A673 (cell line): ENCODE measurements at regions of chr5 and their contacts with region 1.

Region 1: GRCh38 chr5:37814699-37815098 is 25.1 kb downstream of the GDNF start:
- DNase-seq: peak; percentile 77
- H3K4me3 ChIP-seq: no peak overlapping the region
- H3K27ac ChIP-seq: peak overlapping the region; percentile 16
- H3K4me1 ChIP-seq: peaks cover 35% of the 10 kb centered on the region
- H3K27me3 ChIP-seq: no peaks in the 10 kb centered on the region
- CTCF ChIP-seq: no peak

Region 2: GRCh38 chr5:37136694-37137093 is 678.0 kb before region 1 on chr5:
- CTCF ChIA-PET with region 1: no interaction called
- POLR2A ChIA-PET with region 1: no interaction called
- intact Hi-C with region 1: no loop called
- DNase-seq: no peak
- H3K4me3 ChIP-seq: no peak overlapping the region
- H3K27ac ChIP-seq: no peak overlapping the region
- H3K4me1 ChIP-seq: no peaks in the 10 kb centered on the region
- H3K27me3 ChIP-seq: no peaks in the 10 kb centered on the region
- CTCF ChIP-seq: no peak

Region 3: GRCh38 chr5:37722236-37723146 is 92.2 kb before region 1 on chr5:
- CTCF ChIA-PET with region 1: no interaction called
- POLR2A ChIA-PET with region 1: no interaction called
- intact Hi-C with region 1: loop called (anchors 5 kb)
- DNase-seq: peak; percentile 85
- H3K4me3 ChIP-seq: peak overlapping the region; percentile 21
- H3K27ac ChIP-seq: peak overlapping the region; percentile 93
- H3K4me1 ChIP-seq: peaks cover 75% of the 10 kb centered on the region
- H3K27me3 ChIP-seq: no peaks in the 10 kb centered on the region
- CTCF ChIP-seq: no peak